Natural killer cell (primary cell): ENCODE measurements at regions of chr3 and their contacts with region 1.

Region 1: GRCh38 chr3:105827959-105828358 is 40.9 kb downstream of the CBLB start:
- DNase-seq: peak in 1 of 2 donors; percentile 40
- ATAC-seq: no peak
- H3K4me3 ChIP-seq: no peak overlapping the region
- H3K4me3 Mint-ChIP-seq: peak overlapping the region; percentile 30
- H3K27ac ChIP-seq: peak overlapping the region; percentile 56
- H3K27ac Mint-ChIP-seq: peak overlapping the region; percentile 83
- H3K4me1 ChIP-seq: peaks cover 28% of the 10 kb centered on the region
- H3K4me1 Mint-ChIP-seq: peaks cover 87 to 88% of the 10 kb centered on the region in 2 donors
- H3K27me3 ChIP-seq: no peaks in the 10 kb centered on the region
- H3K27me3 Mint-ChIP-seq: no peaks in the 10 kb centered on the region
- CTCF ChIP-seq: no peak

Region 2: GRCh38 chr3:105842943-105843342 is 15.0 kb after region 1 on chr3:
- intact Hi-C with region 1: loop called (anchors 2 kb)
- DNase-seq: no peak
- ATAC-seq: no peak
- H3K4me3 ChIP-seq: no peak overlapping the region
- H3K4me3 Mint-ChIP-seq: no peak overlapping the region
- H3K27ac ChIP-seq: no peak overlapping the region
- H3K27ac Mint-ChIP-seq: no peak overlapping the region
- H3K4me1 ChIP-seq: no peaks in the 10 kb centered on the region
- H3K4me1 Mint-ChIP-seq: peaks cover 67 to 69% of the 10 kb centered on the region in 2 donors
- H3K27me3 ChIP-seq: no peaks in the 10 kb centered on the region
- H3K27me3 Mint-ChIP-seq: no peaks in the 10 kb centered on the region
- CTCF ChIP-seq: no peak

Region 3: DNA sequence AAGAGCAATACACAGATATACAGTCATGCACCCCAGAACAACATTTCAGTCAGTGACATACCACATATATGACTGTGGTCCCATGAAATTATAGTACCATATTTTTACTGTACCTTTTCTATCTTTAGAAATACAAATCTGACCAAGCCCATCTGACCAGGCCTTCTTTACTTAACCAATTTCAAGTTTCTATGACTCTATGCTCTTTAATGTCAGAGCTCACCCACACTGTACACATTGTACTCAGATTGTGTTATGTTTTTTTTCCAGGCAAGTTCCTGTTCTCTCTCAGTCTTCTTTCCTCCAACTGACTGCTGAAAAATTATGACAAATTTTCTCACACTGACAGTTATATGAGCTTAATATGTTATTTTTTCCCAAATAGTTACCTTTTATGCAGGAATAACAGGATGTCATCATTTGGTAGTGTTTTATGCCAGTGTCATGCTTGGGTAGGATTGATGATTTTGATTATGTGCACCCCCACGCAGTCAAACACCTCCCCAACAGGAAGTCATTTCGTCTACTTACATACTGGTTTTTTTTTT is 48.9 kb after region 1 on chr3:
- intact Hi-C with region 1: no loop called
- DNase-seq: peak in 1 of 2 donors; percentile 59
- ATAC-seq: peak; percentile 69 to 86 (median 76)
- H3K4me3 ChIP-seq: peak overlapping the region; percentile 4
- H3K4me3 Mint-ChIP-seq: peak overlapping the region; percentile 79
- H3K27ac ChIP-seq: peak overlapping the region; percentile 65
- H3K27ac Mint-ChIP-seq: peak overlapping the region; percentile 87 to 92
- H3K4me1 ChIP-seq: peaks cover 4% of the 10 kb centered on the region
- H3K4me1 Mint-ChIP-seq: peaks cover 24% of the 10 kb centered on the region in 2 donors
- H3K27me3 ChIP-seq: no peaks in the 10 kb centered on the region
- H3K27me3 Mint-ChIP-seq: no peaks in the 10 kb centered on the region
- CTCF ChIP-seq: no peak